K562 (cell line): ENCODE measurements at regions of chr1 and their contacts with region 1.

Region 1: GRCh38 chr1:16440470-16441281 is at the start of gene NECAP2:
- DNase-seq: peak; percentile 93 to 98 (median 94)
- ATAC-seq: peak; percentile 85
- H3K4me3 ChIP-seq: peak within 1 kb of the TSS; percentile 95
- H3K27ac ChIP-seq: peak within 1 kb of the TSS; percentile 77
- H3K4me1 ChIP-seq: peaks cover 37 to 45% of the 10 kb centered on the region in 2 experiments
- H3K27me3 ChIP-seq: no peaks in the 10 kb centered on the region
- CTCF ChIP-seq: peak; percentile 96 to 98 (median 96)
- EP300 ChIP-seq: peak; percentile 72
- POLR2A ChIP-seq: peak; percentile 95
- RAD21 ChIP-seq: peak; percentile 48 to 61
- polyA plus RNA-seq, gene NECAP2: 22.7 to 30.6 TPM

Region 2: GRCh38 chr1:16425125-16426025 is 15.3 kb before region 1 on chr1:
- CTCF ChIA-PET with region 1: no interaction called
- POLR2A ChIA-PET with region 1: interaction called, 12 read pairs
- in situ Hi-C with region 1: no loop called
- intact Hi-C with region 1: no loop called
- DNase-seq: peak in 1 of 4 experiments; percentile 8
- ATAC-seq: peak; percentile 16; the same call in 1 of the 3 replicates
- H3K4me3 ChIP-seq: no peak overlapping the region
- H3K27ac ChIP-seq: no peak overlapping the region
- H3K4me1 ChIP-seq: peaks cover 2 to 14% of the 10 kb centered on the region in 2 experiments; a peak in 4 of 5 replicates
- H3K27me3 ChIP-seq: peaks cover 8 to 15% of the 10 kb centered on the region in 2 experiments; a peak in 4 of 5 replicates
- CTCF ChIP-seq: no peak
- EP300 ChIP-seq: no peak
- POLR2A ChIP-seq: no peak
- RAD21 ChIP-seq: no peak

Region 3: GRCh38 chr1:16451841-16452528 is 11.3 kb after region 1 on chr1:
- CTCF ChIA-PET with region 1: no interaction called
- POLR2A ChIA-PET with region 1: interaction called, 15 read pairs
- in situ Hi-C with region 1: no loop called
- intact Hi-C with region 1: no loop called
- DNase-seq: no peak
- ATAC-seq: no peak
- H3K4me3 ChIP-seq: no peak overlapping the region
- H3K27ac ChIP-seq: no peak overlapping the region
- H3K4me1 ChIP-seq: no peaks in the 10 kb centered on the region
- H3K27me3 ChIP-seq: no peaks in the 10 kb centered on the region
- CTCF ChIP-seq: no peak
- EP300 ChIP-seq: no peak
- POLR2A ChIP-seq: no peak
- RAD21 ChIP-seq: no peak

Region 4: DNA sequence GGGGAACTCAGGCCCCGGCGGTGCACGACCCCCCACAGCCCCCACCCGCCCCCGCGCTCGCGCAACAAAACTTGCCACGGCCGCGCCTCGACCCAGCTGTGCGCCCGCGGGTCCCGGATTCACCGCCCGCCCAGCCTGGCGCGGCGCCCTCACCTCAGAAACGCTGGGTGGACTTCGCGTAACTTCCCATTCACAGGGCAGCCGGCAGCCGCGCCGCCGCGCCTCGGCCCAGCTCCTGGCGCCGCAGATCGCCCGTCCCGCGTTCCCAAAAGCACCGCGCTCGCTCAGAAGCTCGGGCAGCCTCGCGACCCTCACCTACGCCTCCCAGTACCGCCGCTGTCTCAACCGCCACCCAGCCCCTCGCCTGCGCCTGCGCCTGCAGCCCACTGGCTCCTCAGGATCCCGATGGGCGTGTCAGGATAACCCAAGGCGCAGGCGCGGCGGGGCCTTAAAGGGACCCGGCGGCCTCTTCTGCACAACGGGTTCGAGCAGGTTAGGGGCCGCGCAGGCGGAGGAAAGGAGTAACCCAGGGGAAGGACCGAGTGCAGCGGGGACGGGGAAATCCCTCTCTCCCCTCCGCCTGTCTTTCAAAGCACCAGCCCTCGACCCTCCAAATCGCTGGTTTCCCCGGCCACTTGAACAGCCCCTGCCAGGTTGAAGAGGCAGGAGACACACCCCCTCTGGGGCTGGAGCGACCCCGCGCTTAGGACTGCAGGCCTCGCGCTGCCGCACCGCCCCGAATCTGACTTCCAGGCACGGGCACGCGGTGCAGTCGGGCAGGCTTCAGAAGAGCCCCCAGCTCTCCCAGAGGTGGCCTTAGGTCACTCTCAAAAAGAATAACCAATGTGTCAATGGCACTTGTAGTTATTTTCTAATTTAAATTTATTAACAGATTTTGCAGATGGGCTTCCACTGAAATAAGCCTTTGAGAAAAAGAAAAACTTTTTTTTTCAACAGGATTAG is 172.8 kb after region 1 on chr1 and contains the start of gene NBPF1:
- CTCF ChIA-PET with region 1: no interaction called
- POLR2A ChIA-PET with region 1: no interaction called
- in situ Hi-C with region 1: no loop called
- intact Hi-C with region 1: loop called (anchors 5 kb)
- DNase-seq: peak; percentile 100
- ATAC-seq: peak; percentile 99
- H3K4me3 ChIP-seq: peak within 1 kb of the TSS; percentile 55
- H3K27ac ChIP-seq: peak within 1 kb of the TSS; percentile 42
- H3K4me1 ChIP-seq: peaks cover 25 to 32% of the 10 kb centered on the region in 2 experiments
- H3K27me3 ChIP-seq: no peaks in the 10 kb centered on the region
- CTCF ChIP-seq: peak in 2 of 3 experiments; percentile 30 to 32; a peak in 4 of 6 replicates
- EP300 ChIP-seq: peak; percentile 61; the same call in 1 of the 2 replicates
- POLR2A ChIP-seq: no peak
- RAD21 ChIP-seq: peak; percentile 19 to 52; a peak in 3 of 4 replicates
- polyA plus RNA-seq, gene NBPF1: 5.2 to 7.9 TPM